Right ventricle myocardium inferior (tissue), 1 donor: ENCODE measurements at regions of chr14 and their contacts with region 1.

Region 1: DNA sequence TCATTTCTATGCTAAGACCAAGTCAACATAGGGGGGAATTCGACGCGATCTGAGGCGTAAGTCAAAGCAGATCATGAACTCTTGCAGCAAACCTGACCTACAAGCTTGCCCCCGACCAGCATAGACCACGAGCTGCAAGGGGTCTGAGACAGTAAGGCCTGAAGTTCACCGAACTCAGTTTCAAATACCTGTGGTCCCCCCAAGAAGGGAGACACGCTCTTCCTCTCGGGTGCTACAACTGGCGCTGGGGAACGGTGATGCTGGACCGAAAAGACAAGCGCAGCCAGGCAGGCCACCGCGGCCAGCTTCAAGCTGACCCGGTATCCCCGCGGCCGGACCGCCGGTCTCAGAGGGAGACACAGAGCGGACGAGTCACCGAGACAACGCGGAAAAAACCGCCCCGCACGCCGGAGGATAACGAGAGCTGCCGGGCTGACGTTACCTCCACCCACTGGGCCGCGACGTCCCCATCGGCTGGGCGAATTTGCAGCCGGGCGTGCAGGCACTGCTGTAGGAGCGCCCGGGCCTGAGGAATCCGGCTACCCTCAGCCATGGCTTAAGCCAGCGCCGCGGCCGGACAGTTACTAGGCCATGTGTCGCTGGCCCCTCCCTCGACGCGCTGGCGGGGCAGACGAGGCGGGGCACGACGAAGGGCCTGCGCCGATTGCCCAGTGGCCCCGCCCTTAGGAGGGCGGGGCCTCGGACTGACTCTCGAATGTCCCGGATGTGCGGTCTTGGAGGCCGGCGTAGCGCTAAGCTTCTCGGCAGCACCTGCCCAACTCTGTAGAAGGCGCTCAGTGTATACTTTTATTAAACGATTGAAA is at the start of gene DTD2:
- DNase-seq: peak; percentile 99
- ATAC-seq: peak; percentile 100
- total RNA-seq, gene DTD2: 7.0 TPM

Region 2: GRCh38 chr14:31420319-31421111 is 36.5 kb before region 1 on chr14 and contains the start of gene HEATR5A:
- intact Hi-C with region 1: loop called (anchors 2 kb)
- DNase-seq: peak; percentile 98
- ATAC-seq: peak; percentile 99
- total RNA-seq, gene HEATR5A: 48.1 TPM

Region 3: DNA sequence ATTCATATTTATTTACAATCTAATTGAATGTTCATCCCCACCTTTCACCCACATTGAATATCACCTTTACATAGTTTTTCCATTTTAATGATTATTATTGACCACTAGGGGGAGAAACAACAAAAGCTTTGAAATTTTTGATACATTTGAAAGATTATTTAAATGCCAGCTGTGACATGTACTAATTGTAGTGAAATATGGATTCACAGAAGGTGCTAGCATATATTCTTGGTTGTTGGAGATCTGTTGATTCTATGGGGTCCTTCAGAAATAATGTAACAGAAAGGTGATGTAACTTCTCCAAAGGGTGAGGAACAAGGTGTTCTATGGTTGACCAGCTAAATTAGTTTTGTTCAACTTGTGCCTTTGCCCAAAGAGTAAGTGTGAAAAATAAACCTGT is 53.2 kb after region 1 on chr14:
- intact Hi-C with region 1: loop called (anchors 5 kb)
- DNase-seq: no peak
- ATAC-seq: no peak

Region 4: DNA sequence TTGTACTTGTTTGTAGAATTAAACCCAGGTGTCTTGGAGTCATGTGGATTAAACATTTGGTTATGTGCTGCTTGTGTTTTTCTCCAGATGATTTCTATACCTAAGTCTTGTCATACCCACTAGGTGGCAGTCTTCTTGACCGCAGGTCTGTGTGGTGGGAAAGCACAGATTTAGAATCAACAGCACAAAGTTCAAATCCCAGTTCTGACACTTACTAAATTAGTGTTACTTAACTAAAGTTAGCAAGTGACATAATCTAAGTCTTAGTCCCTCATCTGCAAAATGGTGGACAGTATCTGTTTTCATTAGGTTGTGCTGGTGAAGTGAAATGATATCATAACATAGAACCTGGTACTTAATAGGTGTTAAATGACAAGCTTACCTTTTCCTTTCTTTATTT is 469.1 kb after region 1 on chr14:
- intact Hi-C with region 1: loop called (anchors 10 kb)
- DNase-seq: no peak
- ATAC-seq: no peak